ENCODE measurements at regions of chr16 and their contacts with region 1.

Region 1: DNA sequence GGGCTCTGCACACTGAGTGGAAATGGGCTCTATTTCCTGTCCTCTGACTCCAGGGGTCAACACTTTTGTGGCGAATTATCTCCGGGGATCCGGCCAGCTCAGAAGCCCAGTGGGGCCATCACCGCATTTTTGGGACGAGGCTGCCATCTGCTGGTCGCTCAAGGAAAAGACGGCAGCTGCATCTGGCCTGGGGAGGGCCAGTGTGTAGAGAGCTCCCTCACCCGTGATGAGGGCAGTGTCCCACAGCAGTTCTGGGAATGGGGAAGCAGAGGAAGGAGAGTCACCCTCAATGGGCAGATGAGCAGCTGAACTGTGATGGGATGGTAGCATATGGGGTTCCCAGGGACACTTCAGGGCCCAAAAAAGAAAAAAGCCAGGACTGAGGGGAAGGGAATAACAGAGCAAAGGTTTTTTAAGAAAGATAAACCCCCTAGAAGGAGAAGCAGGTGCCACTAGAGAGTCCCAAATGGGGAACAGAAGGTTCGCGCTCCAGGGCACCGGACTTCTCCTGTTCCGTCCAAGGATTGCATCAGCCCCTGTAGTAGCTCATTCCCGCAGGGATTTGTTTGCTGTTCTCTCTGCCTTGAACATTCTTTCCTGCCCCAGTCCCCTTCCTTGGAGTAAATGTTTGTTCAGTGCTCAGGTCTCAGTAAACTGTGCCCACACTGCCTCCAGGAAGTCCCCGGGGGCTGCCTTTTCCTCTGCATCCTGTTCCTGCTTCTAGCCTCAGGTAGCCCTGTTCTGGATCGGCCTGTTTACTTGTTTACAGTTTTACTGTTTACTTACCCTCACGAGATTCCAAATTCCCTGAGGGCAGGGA is 9.3 kb upstream of the ABCC12 start:
- DNase-seq: peak; percentile 84
- ATAC-seq: peak; percentile 97

Region 2: GRCh38 chr16:47045023-47045422 is 1120.1 kb before region 1 on chr16:
- intact Hi-C with region 1: loop called (anchors 10 kb)
- DNase-seq: no peak
- ATAC-seq: no peak

Region 3: DNA sequence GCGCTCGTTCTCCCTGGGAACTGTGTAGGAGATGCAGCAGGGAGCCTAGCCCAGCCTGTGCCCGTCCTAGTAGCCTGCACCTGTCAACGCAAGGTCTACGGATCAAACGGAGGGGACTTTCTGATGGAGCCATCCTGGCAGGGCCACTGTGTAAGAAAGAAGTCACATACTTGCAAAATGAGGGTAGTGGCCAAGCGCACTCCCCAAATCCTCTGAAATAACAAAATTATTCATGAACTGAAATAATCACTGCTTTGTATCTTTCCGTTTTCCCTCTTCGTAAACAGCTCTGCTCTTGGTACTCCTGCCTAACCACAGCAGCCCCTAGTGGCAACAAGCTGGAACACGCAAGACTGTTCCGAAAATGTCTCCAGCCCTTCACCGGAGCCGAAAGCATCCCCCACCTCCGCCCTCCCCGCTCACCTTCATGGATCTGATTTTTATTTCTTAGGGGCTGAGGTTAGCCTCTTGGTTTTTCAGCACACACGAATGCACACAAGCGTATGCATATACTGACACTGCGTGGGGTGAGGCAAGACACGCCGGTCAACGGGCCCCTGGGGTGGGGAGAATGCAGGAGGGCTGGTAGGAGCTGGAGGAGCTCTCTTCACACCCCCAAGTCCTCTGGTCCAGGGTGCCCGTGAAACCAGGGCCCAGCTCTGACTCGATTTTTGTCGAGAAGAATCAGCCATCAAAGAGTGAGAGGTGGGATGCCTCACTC is 110.1 kb before region 1 on chr16:
- intact Hi-C with region 1: no loop called
- DNase-seq: peak; percentile 47
- ATAC-seq: peak; percentile 89